ENCODE measurements at regions of chr6 and their contacts with region 1.

Region 1: DNA sequence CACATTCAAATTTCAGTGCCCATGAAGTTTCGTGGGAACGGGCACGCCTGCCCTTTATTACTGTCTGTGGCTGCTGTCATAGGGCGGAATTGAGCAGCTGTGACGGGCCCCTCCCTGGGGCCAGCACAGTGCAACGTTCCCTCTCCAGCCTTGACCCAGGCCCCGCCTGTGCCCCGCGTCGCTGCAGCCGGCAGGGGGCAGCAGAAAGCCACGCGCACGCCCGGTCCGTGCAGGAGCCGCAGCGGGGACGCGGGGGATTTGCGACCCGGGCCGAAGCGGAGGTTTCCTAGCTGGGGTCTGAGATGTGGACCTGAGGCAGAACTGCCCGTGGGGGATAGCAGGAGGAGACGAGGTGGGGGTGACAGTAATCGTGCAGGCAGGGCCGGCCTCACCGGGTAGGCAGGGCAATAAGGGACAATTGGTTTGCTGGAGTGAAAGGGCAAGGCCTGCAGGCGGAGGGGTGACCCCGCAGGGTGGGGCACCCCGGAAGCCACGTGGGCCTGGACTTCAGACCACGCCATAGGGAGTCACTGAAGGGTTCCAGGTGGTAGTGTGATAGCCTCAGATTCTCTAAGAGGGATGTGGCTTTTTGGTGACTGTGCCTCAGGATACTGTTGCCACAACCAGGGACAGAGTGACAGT is 54.4 kb downstream of the SYTL3 start:
- DNase-seq: peak; percentile 85
- H3K4me3 ChIP-seq: peak overlapping the region; percentile 54
- H3K27ac ChIP-seq: peak overlapping the region; percentile 87
- H3K4me1 ChIP-seq: peaks cover 50% of the 10 kb centered on the region
- H3K27me3 ChIP-seq: no peaks in the 10 kb centered on the region
- CTCF ChIP-seq: peak; percentile 100

Region 2: DNA sequence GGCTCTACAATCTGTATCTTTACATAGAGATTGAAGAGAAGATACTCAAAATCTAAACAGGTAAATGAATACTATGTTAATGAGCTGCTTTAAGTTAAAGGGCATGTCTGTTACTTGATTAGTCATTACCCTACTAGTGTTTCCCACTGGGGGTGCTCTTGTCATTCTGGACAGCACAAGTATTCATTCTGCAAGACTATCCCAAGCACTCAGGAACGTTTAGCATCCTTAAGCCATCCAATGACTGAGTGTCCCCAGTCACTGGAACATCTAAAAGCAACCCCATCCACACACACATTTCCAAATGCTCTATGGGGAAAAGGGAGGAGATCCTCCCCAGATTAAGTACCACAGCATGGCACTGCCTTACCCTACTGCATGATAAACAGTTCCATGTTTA is 89.1 kb after region 1 on chr6:
- intact Hi-C with region 1: loop called (anchors 10 kb)
- DNase-seq: no peak
- H3K4me3 ChIP-seq: no peak overlapping the region
- H3K27ac ChIP-seq: no peak overlapping the region
- H3K4me1 ChIP-seq: peaks cover 82% of the 10 kb centered on the region
- H3K27me3 ChIP-seq: no peaks in the 10 kb centered on the region
- CTCF ChIP-seq: peak; percentile 50

Region 3: GRCh38 chr6:158869826-158870648 is 165.7 kb after region 1 on chr6:
- intact Hi-C with region 1: loop called (anchors 10 kb)
- DNase-seq: no peak
- H3K4me3 ChIP-seq: peak overlapping the region; percentile 70
- H3K27ac ChIP-seq: peak overlapping the region; percentile 78
- H3K4me1 ChIP-seq: peaks cover 13% of the 10 kb centered on the region
- H3K27me3 ChIP-seq: no peaks in the 10 kb centered on the region
- CTCF ChIP-seq: no peak

Region 4: DNA sequence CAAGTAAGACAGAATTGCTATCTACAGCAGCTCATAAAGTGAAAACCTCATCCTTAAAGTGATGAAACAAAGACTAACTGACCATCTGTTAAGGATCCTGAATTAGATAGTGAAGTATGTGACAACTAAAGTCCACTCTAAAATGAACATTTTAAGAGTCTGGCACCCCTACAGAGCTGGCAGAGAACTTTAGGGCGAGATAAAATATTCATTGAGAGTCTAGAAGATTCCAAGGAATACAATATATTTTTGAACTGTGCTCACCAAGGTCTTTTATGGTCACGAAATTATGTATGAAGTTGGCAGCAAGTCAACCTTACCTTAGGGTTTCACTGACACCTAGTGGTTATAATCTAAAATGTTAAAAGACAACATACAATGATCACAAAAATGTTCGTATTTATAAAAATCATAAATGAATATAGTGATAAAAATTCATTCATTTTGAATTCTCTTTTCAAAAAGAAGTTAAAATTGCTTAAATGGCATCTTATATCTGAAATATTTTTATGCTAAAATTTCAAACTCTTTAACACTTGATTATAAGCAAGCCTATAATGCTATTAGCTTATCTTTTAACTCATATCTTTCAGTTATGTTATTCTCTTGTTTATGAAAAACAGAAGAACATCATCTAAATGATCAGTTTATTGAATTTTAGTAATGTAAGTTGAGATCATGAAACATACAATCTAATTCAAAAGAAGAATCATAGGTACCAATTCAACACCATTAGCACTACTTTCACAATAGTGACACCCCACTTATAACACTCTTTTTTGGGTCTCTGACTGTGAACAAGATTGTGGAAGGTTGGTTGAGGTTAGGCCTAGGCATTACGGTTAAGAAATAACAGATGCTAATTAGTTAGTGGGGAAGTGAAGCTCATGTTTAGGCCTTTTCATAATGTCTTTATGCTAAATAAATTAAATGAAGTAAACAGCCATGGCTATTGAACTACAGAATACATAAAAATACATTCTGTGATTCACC is 268.2 kb after region 1 on chr6:
- intact Hi-C with region 1: loop called (anchors 5 kb)
- DNase-seq: no peak
- H3K4me3 ChIP-seq: no peak overlapping the region
- H3K27ac ChIP-seq: no peak overlapping the region
- H3K4me1 ChIP-seq: peaks cover 18% of the 10 kb centered on the region
- H3K27me3 ChIP-seq: no peaks in the 10 kb centered on the region
- CTCF ChIP-seq: peak; percentile 65